ENCODE measurements at regions of chr4 and their contacts with region 1.

Region 1: GRCh38 chr4:53141308-53141707 is 224.6 kb downstream of the SCFD2 start:
- DNase-seq: no peak
- H3K4me3 Mint-ChIP-seq: no peak overlapping the region
- H3K27ac Mint-ChIP-seq: peak overlapping the region; percentile 28
- H3K4me1 Mint-ChIP-seq: peaks cover 35% of the 10 kb centered on the region
- H3K27me3 Mint-ChIP-seq: no peaks in the 10 kb centered on the region

Region 2: GRCh38 chr4:52983563-52984303 is 157.6 kb before region 1 on chr4:
- intact Hi-C with region 1: no loop called
- DNase-seq: no peak
- H3K4me3 Mint-ChIP-seq: no peak overlapping the region
- H3K27ac Mint-ChIP-seq: no peak overlapping the region
- H3K4me1 Mint-ChIP-seq: no peaks in the 10 kb centered on the region
- H3K27me3 Mint-ChIP-seq: no peaks in the 10 kb centered on the region

Region 3: DNA sequence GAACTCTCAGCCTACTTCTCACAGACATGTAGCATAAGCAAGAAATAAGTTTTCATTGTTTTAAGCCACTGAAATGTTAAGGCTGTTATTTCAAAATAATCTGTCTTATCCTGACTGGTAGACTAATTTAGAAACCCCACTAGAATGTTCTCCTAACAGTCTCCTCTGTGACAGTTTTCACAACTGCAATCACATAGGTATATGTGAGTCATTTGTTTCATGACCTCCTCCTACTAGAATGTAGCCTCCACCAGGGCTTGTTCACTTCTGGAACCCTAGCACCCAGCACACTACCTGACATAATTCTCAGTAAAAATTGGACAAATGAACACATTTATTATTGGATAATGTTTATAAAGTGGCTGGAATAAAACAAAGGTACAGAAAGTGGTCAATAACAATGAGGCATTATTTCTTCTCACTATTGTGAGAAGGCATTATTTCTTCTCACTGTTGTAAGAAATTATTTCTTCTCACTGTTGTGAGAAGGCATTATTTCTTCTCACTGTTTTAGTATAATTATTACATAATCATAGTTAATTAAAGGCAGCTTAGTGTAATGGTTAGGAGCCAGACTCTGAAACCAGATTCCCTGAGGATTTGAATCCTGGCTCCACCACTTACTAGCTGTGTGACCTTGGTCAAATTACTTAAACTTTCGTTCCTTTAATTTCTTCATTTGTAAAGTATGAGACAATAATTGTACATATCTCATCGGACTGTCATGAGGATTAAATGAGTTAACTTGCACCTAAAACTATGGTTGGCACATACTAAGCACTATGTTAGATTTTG is 27.7 kb before region 1 on chr4:
- intact Hi-C with region 1: loop called (anchors 1 kb)
- DNase-seq: no peak
- H3K4me3 Mint-ChIP-seq: no peak overlapping the region
- H3K27ac Mint-ChIP-seq: peak overlapping the region; percentile 86
- H3K4me1 Mint-ChIP-seq: peaks cover 27% of the 10 kb centered on the region
- H3K27me3 Mint-ChIP-seq: no peaks in the 10 kb centered on the region

Region 4: DNA sequence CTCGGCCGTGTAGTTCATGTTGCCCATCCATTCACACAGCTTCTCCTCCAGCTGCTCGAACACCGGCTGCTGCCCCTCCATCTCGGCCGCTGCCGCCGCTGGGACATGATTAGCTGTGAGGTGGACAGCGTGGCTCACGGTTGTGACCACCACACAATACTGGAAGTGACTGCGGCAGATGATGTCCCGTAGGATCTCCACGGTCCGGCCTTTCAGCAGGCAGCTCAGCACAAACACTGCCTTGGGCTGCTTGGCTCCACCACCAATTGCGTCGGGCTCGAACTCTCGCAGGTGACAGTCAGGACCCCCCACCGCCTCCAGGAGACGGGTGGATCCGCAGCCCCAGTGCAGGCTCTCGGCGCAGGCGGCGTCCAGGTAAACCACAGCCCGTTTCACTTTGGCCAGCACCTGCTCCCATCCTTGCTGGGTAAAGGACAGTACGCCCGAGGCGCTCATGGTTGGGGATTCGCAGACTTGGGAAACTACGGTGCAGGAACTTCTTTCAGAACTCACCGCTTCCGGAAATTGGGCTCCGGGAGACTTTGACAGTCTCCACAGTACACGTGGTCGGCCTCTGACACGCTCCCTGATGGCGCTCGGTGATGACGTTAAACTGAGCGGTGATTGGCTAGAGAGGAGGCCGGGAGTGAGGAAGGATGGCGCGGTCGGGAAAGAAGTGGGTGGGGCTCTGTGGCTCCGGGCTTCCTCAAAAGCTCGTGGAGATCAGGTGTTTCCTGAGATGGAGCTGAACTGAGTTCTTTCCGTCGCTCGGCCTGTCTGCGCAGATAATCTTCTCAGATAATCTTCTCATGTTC is 224.4 kb after region 1 on chr4 and contains the start of gene SCFD2:
- intact Hi-C with region 1: loop called (anchors 2 kb)
- DNase-seq: peak; percentile 95
- H3K4me3 Mint-ChIP-seq: peak within 1 kb of the TSS; percentile 98
- H3K27ac Mint-ChIP-seq: peak within 1 kb of the TSS; percentile 88
- H3K4me1 Mint-ChIP-seq: peaks cover 39% of the 10 kb centered on the region
- H3K27me3 Mint-ChIP-seq: peaks cover 5% of the 10 kb centered on the region
- total RNA-seq, gene SCFD2: 39.4 and 40.5 TPM in 2 replicates

Measured in activated T-helper 1 cell treated with anti-CD3 and anti-CD28 coated beads, Interleukin-12 subunit alpha, Interleukin-12 subunit beta, Interleukin-2, Interleukin-4 antibody, amounts not matched to agents 30 ng/mL and 10 ng/mL and 1 ng/mL, durations not matched to agents 14 hours and 24 hours and 36 hours (primary cell).